Posterior vena cava (tissue), 2 donors: ENCODE measurements at regions of chr5 and their contacts with region 1.

Region 1: GRCh38 chr5:140639148-140639979 is at the start of gene TMCO6:
- DNase-seq: peak; percentile 99
- total RNA-seq, gene TMCO6: 6.6 to 11.2 TPM

Region 2: GRCh38 chr5:140547508-140548299 is 91.7 kb before region 1 on chr5 and contains the start of gene EIF4EBP3:
- intact Hi-C with region 1: loop called in 1 of 2 experiments (anchors 5 kb)
- DNase-seq: peak; percentile 99
- total RNA-seq, gene EIF4EBP3: 8.5 to 11.0 TPM

Region 3: DNA sequence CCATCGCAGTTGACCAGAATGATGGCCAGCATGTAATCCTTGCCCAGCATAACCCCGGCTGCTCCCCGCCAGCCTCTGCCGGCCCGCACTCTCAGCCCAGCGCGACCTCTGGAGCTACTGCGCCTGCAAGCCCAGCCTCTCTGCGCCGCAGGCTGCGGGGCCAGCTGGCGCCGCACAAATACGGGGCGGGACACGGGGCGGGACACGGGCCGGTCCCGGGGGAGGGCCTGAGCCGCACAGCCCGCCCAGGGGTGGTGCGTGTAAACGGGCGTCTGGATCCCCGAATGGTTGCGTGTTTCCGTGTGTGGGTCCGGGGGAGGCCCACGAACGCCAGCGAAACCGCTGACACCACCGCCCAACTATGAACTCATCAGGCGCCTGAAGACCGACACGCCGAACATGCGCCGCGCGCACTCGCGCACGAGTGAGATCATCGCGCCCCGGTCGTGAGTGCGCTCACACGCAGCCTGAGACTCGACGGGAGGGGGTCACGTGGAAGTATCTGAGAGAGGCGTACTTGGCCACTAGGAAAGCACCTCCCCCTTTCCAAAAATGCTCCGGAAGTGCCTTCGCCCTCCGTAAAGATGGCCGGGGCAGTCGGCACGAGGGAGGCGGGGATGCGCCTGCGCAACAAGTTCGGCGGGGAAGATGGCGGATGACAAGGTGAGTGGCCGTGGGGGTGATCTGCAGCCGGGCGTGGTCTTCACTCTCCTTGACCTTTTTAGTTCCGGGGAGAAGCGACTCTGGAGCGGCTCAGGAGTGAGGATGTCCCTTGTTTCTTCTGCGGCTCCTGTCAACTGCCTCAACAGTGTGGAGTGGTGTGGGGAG is 75.0 kb before region 1 on chr5 and contains the starts of genes APBB3 and SLC35A4:
- intact Hi-C with region 1: loop called (anchors 5 to 10 kb)
- DNase-seq: peak; percentile 99
- total RNA-seq, gene APBB3: 12.5 to 19.7 TPM
- total RNA-seq, gene SLC35A4: 43.9 to 55.0 TPM

Region 4: GRCh38 chr5:140690941-140691924 is 51.9 kb after region 1 on chr5 and contains the starts of genes HARS1 and HARS2:
- intact Hi-C with region 1: no loop called
- DNase-seq: peak; percentile 97
- total RNA-seq, gene HARS1: 38.0 to 48.2 TPM
- total RNA-seq, gene HARS2: 16.8 to 19.2 TPM